ENCODE measurements at regions of chr1 and their contacts with region 1.

Region 1: GRCh38 chr1:9957726-9958125 is 14.5 kb downstream of the NMNAT1 start:
- DNase-seq: no peak
- ATAC-seq: no peak

Region 2: DNA sequence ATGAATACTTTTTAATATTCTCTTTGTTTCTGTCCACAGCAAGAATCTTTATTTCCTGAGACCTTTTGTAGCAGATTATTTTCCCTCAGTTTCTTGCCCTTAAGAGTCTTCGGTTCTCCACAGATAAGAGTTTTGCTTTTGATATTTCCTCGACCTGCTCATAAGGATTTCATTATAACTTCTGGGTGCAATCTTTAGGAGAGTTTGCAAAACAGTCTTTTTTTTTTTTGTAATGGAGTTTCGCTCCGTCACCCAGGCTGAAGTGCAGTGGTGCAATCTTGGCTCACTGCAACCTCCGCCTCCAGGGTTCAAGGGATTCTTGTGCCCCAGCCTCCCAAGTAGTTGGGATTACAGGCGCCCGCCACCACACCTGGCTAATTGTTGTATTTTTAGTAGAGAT is 64.9 kb after region 1 on chr1:
- intact Hi-C with region 1: loop called in 1 of 2 experiments (anchors 10 kb)
- DNase-seq: no peak
- ATAC-seq: no peak

Region 3: DNA sequence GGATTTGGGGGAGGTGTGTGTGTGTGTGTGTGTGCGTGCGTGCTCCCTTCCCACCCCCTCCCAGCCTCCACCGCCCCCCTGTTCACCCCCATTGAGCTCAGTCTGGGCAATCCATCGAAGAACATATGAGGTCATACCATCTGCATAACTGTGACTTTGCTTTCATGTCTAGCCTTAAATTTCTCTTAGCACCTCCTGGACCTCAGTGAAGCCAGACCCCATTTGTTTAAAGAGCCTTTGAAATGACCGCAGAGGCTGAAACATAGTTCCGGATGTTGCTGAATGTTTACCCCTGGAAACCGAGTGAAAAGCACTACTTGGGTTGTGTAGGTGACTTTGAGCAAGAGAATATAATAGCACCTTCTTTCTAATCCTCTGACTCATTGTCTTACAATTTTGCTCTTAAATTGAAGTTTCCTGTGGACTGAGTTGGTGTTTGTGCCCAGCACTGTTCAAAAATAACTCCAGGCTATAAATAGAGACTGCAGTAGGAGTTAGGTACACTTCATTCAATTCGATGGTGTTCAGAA is 150.5 kb after region 1 on chr1:
- intact Hi-C with region 1: no loop called
- DNase-seq: no peak
- ATAC-seq: no peak

Region 4: GRCh38 chr1:10451287-10451686 is 493.6 kb after region 1 on chr1:
- intact Hi-C with region 1: no loop called
- DNase-seq: no peak
- ATAC-seq: no peak